K562 (cell line): ENCODE measurements at regions of chr12 and their contacts with region 1.

Region 1: DNA sequence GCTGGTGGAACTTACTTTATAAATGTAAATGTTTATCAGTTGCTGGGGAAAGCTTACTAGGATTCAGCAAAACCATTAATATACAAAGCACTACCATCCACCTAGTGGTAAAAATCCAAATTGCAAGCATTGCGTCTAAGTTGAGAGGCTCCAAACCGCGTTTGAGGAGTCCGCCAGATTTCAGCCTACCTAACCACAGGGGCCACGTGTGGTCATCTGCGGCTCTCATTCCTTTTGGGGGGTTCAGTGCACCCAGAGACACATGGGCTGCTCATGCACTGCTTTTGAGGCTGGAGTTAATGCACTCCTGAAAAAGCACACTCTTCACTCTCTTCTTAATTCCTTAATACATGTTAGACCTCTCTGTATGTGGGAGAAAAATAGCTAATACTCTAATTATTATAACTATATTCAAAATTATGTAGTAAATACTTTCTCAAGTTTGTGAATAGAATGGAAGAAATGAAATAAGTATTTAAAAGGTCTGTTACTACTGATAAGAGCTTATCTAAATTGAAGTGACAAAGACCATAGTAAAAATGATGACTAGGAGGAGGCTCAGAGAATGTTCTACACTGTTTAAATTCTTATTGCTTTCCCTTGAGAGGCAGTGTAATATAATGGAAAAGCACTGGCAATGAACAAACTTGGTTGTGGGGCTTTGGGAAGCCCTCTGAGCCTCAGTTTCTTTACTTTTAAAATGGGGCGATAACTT is 41.4 kb upstream of the MANSC4 start:
- DNase-seq: peak; percentile 65 to 86 (median 70)
- ATAC-seq: peak; percentile 86
- H3K4me3 ChIP-seq: no peak overlapping the region
- H3K27ac ChIP-seq: no peak overlapping the region
- H3K4me1 ChIP-seq: peaks cover 0 to 26% of the 10 kb centered on the region in 2 experiments; a peak in 3 of 5 replicates
- H3K27me3 ChIP-seq: no peaks in the 10 kb centered on the region
- CTCF ChIP-seq: peak; percentile 46 to 79 (median 74); a peak in 5 of 6 replicates
- EP300 ChIP-seq: peak; percentile 25; the same call in 1 of the 2 replicates
- POLR2A ChIP-seq: no peak
- RAD21 ChIP-seq: peak in 1 of 2 experiments; percentile 62; a peak in 3 of 4 replicates

Region 2: GRCh38 chr12:27754795-27755194 is 66.6 kb before region 1 on chr12:
- CTCF ChIA-PET with region 1: no interaction called
- POLR2A ChIA-PET with region 1: no interaction called
- in situ Hi-C with region 1: no loop called
- intact Hi-C with region 1: no loop called
- DNase-seq: no peak
- ATAC-seq: no peak
- H3K4me3 ChIP-seq: no peak overlapping the region
- H3K27ac ChIP-seq: no peak overlapping the region
- H3K4me1 ChIP-seq: peaks cover 5 to 8% of the 10 kb centered on the region in 2 experiments; a peak in 3 of 5 replicates
- H3K27me3 ChIP-seq: no peaks in the 10 kb centered on the region
- CTCF ChIP-seq: no peak
- EP300 ChIP-seq: no peak
- POLR2A ChIP-seq: no peak
- RAD21 ChIP-seq: no peak

Region 3: GRCh38 chr12:27769212-27769611 is 52.2 kb before region 1 on chr12:
- CTCF ChIA-PET with region 1: no interaction called
- POLR2A ChIA-PET with region 1: no interaction called
- in situ Hi-C with region 1: no loop called
- intact Hi-C with region 1: no loop called
- DNase-seq: no peak
- ATAC-seq: no peak
- H3K4me3 ChIP-seq: no peak overlapping the region
- H3K27ac ChIP-seq: no peak overlapping the region
- H3K4me1 ChIP-seq: no peaks in the 10 kb centered on the region; a peak in 1 of 5 replicates
- H3K27me3 ChIP-seq: no peaks in the 10 kb centered on the region
- CTCF ChIP-seq: no peak
- EP300 ChIP-seq: no peak
- POLR2A ChIP-seq: no peak
- RAD21 ChIP-seq: no peak

Region 4: GRCh38 chr12:27779920-27780611 is 41.4 kb before region 1 on chr12 and contains the starts of genes KLHL42 and MANSC4:
- CTCF ChIA-PET with region 1: no interaction called
- POLR2A ChIA-PET with region 1: no interaction called
- in situ Hi-C with region 1: no loop called
- intact Hi-C with region 1: loop called (anchors 5 kb)
- DNase-seq: peak; percentile 71 to 81 (median 76)
- ATAC-seq: peak; percentile 88
- H3K4me3 ChIP-seq: peak within 1 kb of the TSS; percentile 66
- H3K27ac ChIP-seq: peak within 1 kb of the TSS; percentile 71
- H3K4me1 ChIP-seq: peaks cover 11 to 28% of the 10 kb centered on the region in 2 experiments; a peak in 4 of 5 replicates
- H3K27me3 ChIP-seq: no peaks in the 10 kb centered on the region
- CTCF ChIP-seq: no peak
- EP300 ChIP-seq: no peak
- POLR2A ChIP-seq: peak; percentile 56; the same call in 1 of the 2 replicates
- RAD21 ChIP-seq: no peak
- polyA plus RNA-seq, gene KLHL42: 1.5 TPM
- polyA plus RNA-seq, gene MANSC4: not detected

Region 5: DNA sequence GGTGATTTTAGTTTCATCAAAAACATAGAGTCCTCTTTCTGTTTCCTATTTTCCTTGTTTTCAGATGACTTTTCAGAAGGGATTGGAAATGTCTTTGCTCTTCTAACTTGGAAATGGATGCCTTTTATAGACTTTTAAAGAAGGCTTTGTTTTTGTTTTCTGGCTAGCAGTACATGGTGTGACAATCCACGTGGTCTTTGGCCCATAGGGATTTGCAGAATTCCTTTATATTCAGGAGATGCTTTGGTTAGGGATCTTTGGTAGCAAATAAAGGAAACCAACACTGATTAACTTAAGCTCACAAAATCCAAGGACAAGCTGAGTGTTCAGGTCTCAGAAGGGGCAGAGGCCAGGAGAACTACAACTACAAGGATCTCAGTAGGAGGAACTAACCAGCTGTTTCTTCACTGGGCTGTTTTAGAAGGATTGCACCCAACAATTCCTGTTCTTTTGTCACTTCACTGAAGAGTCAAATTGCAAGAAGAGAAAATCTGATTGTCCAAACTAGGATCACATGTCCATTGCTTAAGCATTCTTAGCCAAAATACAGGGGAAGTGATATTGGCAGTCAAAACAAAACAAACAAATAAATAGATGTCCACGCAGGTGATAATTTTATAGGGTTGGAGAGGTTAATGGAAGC is 17.2 kb after region 1 on chr12:
- CTCF ChIA-PET with region 1: no interaction called
- POLR2A ChIA-PET with region 1: no interaction called
- in situ Hi-C with region 1: no loop called
- intact Hi-C with region 1: no loop called
- DNase-seq: no peak
- ATAC-seq: no peak
- H3K4me3 ChIP-seq: no peak overlapping the region
- H3K27ac ChIP-seq: no peak overlapping the region
- H3K4me1 ChIP-seq: peaks cover 6 to 11% of the 10 kb centered on the region in 2 experiments; a peak in 3 of 5 replicates
- H3K27me3 ChIP-seq: no peaks in the 10 kb centered on the region
- CTCF ChIP-seq: no peak
- EP300 ChIP-seq: no peak
- POLR2A ChIP-seq: no peak
- RAD21 ChIP-seq: no peak

Region 6: DNA sequence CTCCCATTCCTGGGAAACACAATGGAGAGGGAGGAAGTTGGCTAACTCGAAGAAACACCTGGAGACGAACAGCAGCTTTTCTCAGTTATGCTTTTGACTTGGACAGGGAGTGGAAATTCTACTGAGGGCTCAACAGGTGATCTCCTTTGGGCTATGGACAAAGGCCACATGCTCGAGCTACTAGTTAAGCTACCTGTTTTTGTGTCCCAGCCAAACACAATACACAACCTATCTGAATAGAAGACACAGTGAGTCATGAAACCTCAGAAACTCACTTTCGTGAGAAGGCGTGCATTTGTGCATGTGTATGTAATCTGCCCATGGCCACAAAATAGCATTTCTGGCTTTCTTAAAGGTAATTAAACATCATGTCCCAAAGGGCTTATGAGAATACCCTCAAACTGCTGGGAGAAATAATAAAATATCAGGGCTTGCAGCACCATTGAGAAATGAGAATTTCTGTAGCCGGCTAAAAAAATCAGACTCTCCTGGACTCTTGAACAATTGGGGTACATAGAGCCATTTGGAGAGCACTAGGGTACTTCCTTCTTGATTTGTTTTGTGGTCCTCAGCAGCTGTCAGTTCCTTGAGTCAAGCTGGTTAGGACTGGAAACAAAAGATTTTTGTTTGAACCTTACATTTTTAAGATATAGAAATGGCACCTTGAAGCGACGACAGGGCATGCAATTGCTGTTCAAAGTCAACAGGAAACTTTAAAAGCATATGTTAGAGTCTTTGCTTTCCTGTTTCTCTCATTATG is 236.6 kb after region 1 on chr12:
- CTCF ChIA-PET with region 1: no interaction called
- POLR2A ChIA-PET with region 1: no interaction called
- in situ Hi-C with region 1: no loop called
- intact Hi-C with region 1: no loop called
- DNase-seq: no peak
- ATAC-seq: no peak
- H3K4me3 ChIP-seq: no peak overlapping the region
- H3K27ac ChIP-seq: no peak overlapping the region
- H3K4me1 ChIP-seq: no peaks in the 10 kb centered on the region
- H3K27me3 ChIP-seq: no peaks in the 10 kb centered on the region
- CTCF ChIP-seq: no peak
- EP300 ChIP-seq: no peak
- POLR2A ChIP-seq: no peak
- RAD21 ChIP-seq: no peak